ENCODE measurements at regions of chr17 and their contacts with region 1.

Region 1: DNA sequence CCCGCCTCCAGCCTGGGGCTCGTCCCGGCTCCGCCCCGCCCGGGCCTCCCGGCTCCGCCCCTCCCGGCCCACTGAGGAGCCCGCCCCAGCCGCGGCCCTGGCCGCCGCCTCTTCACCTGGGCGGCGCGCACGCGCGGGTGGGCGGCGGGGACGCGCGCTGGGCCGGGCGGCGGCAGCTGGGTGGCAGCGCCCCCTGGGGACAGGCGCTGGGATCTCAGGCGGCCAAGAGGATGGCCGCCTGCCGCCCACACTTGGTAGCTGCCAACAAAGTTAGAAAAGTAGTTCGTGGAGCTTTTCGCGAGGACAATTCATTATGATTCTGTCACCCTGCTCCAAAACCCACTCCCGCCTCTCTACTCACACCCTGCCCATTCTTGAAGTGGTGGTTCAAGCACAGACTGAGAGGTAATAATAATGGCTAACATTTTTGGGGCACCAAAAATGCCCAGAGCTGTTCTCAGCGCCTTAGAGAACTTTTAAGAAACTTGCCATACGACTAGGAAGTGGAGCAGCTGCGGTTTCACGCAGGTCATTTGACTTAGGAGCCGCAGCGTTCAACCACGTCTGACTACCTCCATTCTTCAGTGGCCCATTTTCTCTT is 340 bp upstream of the MYO1D start:
- DNase-seq: peak; percentile 37
- ATAC-seq: peak; percentile 92
- H3K4me3 ChIP-seq: peak overlapping the region; percentile 51
- H3K27ac ChIP-seq: peak overlapping the region; percentile 66
- H3K4me1 ChIP-seq: no peaks in the 10 kb centered on the region
- H3K27me3 ChIP-seq: no peaks in the 10 kb centered on the region
- CTCF ChIP-seq: peak; percentile 83 to 94 (median 88); a peak in 5 of 6 replicates
- EP300 ChIP-seq: no peak
- POLR2A ChIP-seq: no peak
- RAD21 ChIP-seq: peak; percentile 80

Region 2: GRCh38 chr17:32803544-32803943 is 73.7 kb before region 1 on chr17:
- CTCF ChIA-PET with region 1: interaction called, 53 read pairs
- POLR2A ChIA-PET with region 1: interaction called, 4 read pairs
- RAD21 ChIA-PET with region 1: interaction called, 28 read pairs
- SMC1A ChIA-PET with region 1: interaction called, 13 read pairs
- in situ Hi-C with region 1: no loop called
- intact Hi-C with region 1: no loop called
- DNase-seq: no peak
- ATAC-seq: no peak
- H3K4me3 ChIP-seq: no peak overlapping the region
- H3K27ac ChIP-seq: no peak overlapping the region
- H3K4me1 ChIP-seq: no peaks in the 10 kb centered on the region
- H3K27me3 ChIP-seq: no peaks in the 10 kb centered on the region
- CTCF ChIP-seq: no peak
- EP300 ChIP-seq: no peak
- POLR2A ChIP-seq: no peak
- RAD21 ChIP-seq: no peak

Region 3: DNA sequence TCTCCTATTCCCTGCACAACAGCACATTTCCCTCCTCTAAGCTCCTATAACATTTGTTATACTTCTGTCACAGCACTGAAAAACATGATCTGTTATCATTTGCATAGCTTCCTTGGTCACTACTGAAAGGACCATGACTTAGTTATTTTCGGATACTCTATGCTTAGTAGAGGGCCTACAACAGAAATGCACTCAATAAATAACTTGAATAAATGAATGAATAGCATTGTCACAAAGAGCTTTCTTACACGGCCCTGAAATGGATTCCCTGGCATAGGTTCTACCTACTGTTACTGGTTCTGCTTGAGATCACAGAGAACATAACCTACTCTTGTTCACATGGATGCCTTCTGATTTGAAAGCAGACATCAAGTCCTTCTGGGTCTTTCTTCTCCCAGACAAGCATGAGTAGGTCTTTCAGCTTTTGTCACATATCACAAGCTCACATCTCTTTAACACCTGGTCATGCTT is 41.9 kb before region 1 on chr17:
- CTCF ChIA-PET with region 1: interaction called, 146 read pairs
- POLR2A ChIA-PET with region 1: interaction called, 36 read pairs
- RAD21 ChIA-PET with region 1: interaction called, 198 read pairs
- SMC1A ChIA-PET with region 1: interaction called, 231 read pairs
- in situ Hi-C with region 1: no loop called
- intact Hi-C with region 1: no loop called
- DNase-seq: peak; percentile 70
- ATAC-seq: peak; percentile 84
- H3K4me3 ChIP-seq: peak overlapping the region; percentile 60
- H3K27ac ChIP-seq: peak overlapping the region; percentile 95
- H3K4me1 ChIP-seq: peaks cover 41% of the 10 kb centered on the region
- H3K27me3 ChIP-seq: no peaks in the 10 kb centered on the region
- CTCF ChIP-seq: no peak
- EP300 ChIP-seq: 0 out of 4 replicates have a peak, but pooled peaks of 1 of the 2 experiments have one; percentile 10
- POLR2A ChIP-seq: no peak
- RAD21 ChIP-seq: no peak

Region 4: GRCh38 chr17:32859857-32860525 is 17.3 kb before region 1 on chr17:
- CTCF ChIA-PET with region 1: interaction called, 112 read pairs
- POLR2A ChIA-PET with region 1: interaction called, 21 read pairs
- RAD21 ChIA-PET with region 1: interaction called, 20 read pairs
- SMC1A ChIA-PET with region 1: interaction called, 127 read pairs
- in situ Hi-C with region 1: no loop called
- intact Hi-C with region 1: no loop called
- DNase-seq: no peak
- ATAC-seq: peak; percentile 97
- H3K4me3 ChIP-seq: no peak overlapping the region
- H3K27ac ChIP-seq: no peak overlapping the region
- H3K4me1 ChIP-seq: peaks cover 6% of the 10 kb centered on the region; the same call in 1 of the 2 replicates
- H3K27me3 ChIP-seq: no peaks in the 10 kb centered on the region
- CTCF ChIP-seq: no peak
- EP300 ChIP-seq: no peak
- POLR2A ChIP-seq: no peak
- RAD21 ChIP-seq: no peak

Region 5: GRCh38 chr17:32915245-32915644 is 38.0 kb after region 1 on chr17:
- CTCF ChIA-PET with region 1: interaction called, 139 read pairs
- POLR2A ChIA-PET with region 1: interaction called, 3 read pairs
- RAD21 ChIA-PET with region 1: interaction called, 60 read pairs
- SMC1A ChIA-PET with region 1: interaction called, 96 read pairs
- in situ Hi-C with region 1: no loop called
- intact Hi-C with region 1: no loop called
- DNase-seq: no peak
- ATAC-seq: no peak
- H3K4me3 ChIP-seq: no peak overlapping the region
- H3K27ac ChIP-seq: no peak overlapping the region
- H3K4me1 ChIP-seq: no peaks in the 10 kb centered on the region
- H3K27me3 ChIP-seq: no peaks in the 10 kb centered on the region
- CTCF ChIP-seq: no peak
- EP300 ChIP-seq: no peak
- POLR2A ChIP-seq: no peak
- RAD21 ChIP-seq: no peak

Region 6: GRCh38 chr17:32997753-32998632 is 120.7 kb after region 1 on chr17:
- CTCF ChIA-PET with region 1: interaction called, 16 read pairs
- POLR2A ChIA-PET with region 1: no interaction called
- RAD21 ChIA-PET with region 1: interaction called, 14 read pairs
- SMC1A ChIA-PET with region 1: interaction called, 4 read pairs
- in situ Hi-C with region 1: no loop called
- intact Hi-C with region 1: no loop called
- DNase-seq: no peak
- ATAC-seq: peak; percentile 92
- H3K4me3 ChIP-seq: no peak overlapping the region
- H3K27ac ChIP-seq: no peak overlapping the region
- H3K4me1 ChIP-seq: peaks cover 13% of the 10 kb centered on the region
- H3K27me3 ChIP-seq: no peaks in the 10 kb centered on the region; a peak in 1 of 4 replicates
- CTCF ChIP-seq: peak; percentile 78 to 91 (median 84)
- EP300 ChIP-seq: no peak
- POLR2A ChIP-seq: no peak
- RAD21 ChIP-seq: peak; percentile 66

Region 7: DNA sequence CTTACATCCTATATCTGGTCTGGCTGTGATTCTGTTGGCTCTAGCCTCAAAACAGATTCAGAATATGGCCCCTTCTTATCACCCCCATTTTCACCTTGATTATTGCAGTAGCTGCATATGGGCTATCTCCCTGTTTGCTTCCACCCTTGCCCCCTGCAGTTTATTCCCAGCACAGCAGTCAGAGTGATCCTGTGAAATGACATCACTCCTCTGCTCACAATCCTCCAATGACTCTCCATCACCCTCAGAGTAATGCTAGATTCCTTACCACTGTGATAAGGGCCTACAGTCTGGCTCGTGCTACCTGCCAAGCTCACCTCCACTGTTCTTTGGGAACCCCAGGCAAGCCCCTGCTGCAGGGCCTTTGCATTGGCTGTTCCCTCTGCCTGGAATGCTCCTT is 323.3 kb after region 1 on chr17:
- CTCF ChIA-PET with region 1: no interaction called
- POLR2A ChIA-PET with region 1: no interaction called
- RAD21 ChIA-PET with region 1: no interaction called
- SMC1A ChIA-PET with region 1: no interaction called
- in situ Hi-C with region 1: no loop called
- intact Hi-C with region 1: no loop called
- DNase-seq: no peak
- ATAC-seq: no peak
- H3K4me3 ChIP-seq: no peak overlapping the region
- H3K27ac ChIP-seq: no peak overlapping the region
- H3K4me1 ChIP-seq: no peaks in the 10 kb centered on the region
- H3K27me3 ChIP-seq: no peaks in the 10 kb centered on the region
- CTCF ChIP-seq: no peak
- EP300 ChIP-seq: no peak
- POLR2A ChIP-seq: no peak
- RAD21 ChIP-seq: no peak

Measured in GM12878 (cell line).